ENCODE measurements at regions of chr11 and their contacts with region 1.

Region 1: GRCh38 chr11:35006389-35007128 is 90.1 kb downstream of the PDHX start:
- DNase-seq: no peak
- H3K4me3 Mint-ChIP-seq: no peak overlapping the region
- H3K27ac Mint-ChIP-seq: peak overlapping the region; percentile 86
- H3K4me1 Mint-ChIP-seq: peaks cover 73% of the 10 kb centered on the region
- H3K27me3 Mint-ChIP-seq: no peaks in the 10 kb centered on the region
- CTCF ChIP-seq: no peak

Region 2: GRCh38 chr11:34869426-34869825 is 137.1 kb before region 1 on chr11:
- CTCF ChIA-PET with region 1: no interaction called
- intact Hi-C with region 1: no loop called
- DNase-seq: no peak
- H3K4me3 Mint-ChIP-seq: no peak overlapping the region
- H3K27ac Mint-ChIP-seq: no peak overlapping the region
- H3K4me1 Mint-ChIP-seq: peaks cover 16% of the 10 kb centered on the region
- H3K27me3 Mint-ChIP-seq: no peaks in the 10 kb centered on the region
- CTCF ChIP-seq: no peak

Region 3: GRCh38 chr11:34886609-34887008 is 120.0 kb before region 1 on chr11:
- CTCF ChIA-PET with region 1: no interaction called
- intact Hi-C with region 1: no loop called
- DNase-seq: no peak
- H3K4me3 Mint-ChIP-seq: no peak overlapping the region
- H3K27ac Mint-ChIP-seq: peak overlapping the region; percentile 9
- H3K4me1 Mint-ChIP-seq: peaks cover 20% of the 10 kb centered on the region
- H3K27me3 Mint-ChIP-seq: no peaks in the 10 kb centered on the region
- CTCF ChIP-seq: no peak

Region 4: DNA sequence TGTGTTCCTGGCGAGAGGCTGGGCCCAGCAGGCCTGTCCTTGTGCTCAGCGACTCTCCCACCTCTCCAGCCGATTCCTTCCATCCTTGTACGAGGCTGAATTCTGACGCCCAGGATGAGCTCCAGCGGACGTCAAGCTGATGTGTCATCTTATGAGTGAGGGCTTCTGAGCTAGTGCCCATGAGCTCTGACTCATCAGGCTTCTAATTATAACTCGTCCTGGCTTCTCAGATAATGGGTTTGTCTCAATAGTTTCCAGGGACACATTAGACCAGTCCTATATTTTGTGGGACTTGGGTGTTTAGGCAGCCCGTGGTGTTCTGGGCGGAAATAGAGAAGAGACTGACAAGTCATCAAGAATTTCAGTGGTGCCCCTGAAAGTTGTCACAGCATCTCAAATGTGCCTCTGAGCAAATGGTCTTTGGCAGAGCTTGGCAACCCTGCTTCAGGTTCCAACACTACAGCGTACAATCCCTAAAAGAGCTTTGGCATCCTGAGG is 24.2 kb after region 1 on chr11:
- CTCF ChIA-PET with region 1: interaction called, 10 read pairs
- intact Hi-C with region 1: no loop called
- DNase-seq: peak; percentile 41
- H3K4me3 Mint-ChIP-seq: no peak overlapping the region
- H3K27ac Mint-ChIP-seq: no peak overlapping the region
- H3K4me1 Mint-ChIP-seq: peaks cover 54% of the 10 kb centered on the region
- H3K27me3 Mint-ChIP-seq: no peaks in the 10 kb centered on the region
- CTCF ChIP-seq: no peak

Region 5: DNA sequence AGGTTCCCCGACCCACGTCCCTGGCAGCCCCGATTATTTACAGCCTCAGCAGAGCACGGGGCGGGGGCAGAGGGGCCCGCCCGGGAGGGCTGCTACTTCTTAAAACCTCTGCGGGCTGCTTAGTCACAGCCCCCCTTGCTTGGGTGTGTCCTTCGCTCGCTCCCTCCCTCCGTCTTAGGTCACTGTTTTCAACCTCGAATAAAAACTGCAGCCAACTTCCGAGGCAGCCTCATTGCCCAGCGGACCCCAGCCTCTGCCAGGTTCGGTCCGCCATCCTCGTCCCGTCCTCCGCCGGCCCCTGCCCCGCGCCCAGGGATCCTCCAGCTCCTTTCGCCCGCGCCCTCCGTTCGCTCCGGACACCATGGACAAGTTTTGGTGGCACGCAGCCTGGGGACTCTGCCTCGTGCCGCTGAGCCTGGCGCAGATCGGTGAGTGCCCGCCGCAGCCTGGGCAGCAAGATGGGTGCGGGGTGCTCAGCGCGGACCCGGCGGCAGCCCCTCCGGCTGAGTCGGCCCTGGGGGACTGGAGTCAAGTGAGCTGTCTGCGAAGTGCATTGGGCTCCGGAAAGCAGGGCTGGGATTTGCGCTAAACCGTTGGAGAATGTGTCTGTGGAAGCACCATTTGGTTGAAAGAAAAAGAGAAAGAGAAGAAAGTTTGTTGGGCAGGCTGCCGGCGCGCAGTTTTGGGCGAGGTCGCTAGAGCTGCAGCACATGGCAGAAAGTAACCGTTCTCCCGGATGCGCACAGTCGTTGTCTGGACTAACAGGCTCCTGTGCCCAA is 132.6 kb after region 1 on chr11 and contains the start of gene CD44:
- CTCF ChIA-PET with region 1: interaction called, 26 read pairs
- intact Hi-C with region 1: loop called (anchors 1 kb)
- DNase-seq: peak; percentile 67
- H3K4me3 Mint-ChIP-seq: peak within 1 kb of the TSS; percentile 87
- H3K27ac Mint-ChIP-seq: peak within 1 kb of the TSS; percentile 65
- H3K4me1 Mint-ChIP-seq: peaks cover 59% of the 10 kb centered on the region
- H3K27me3 Mint-ChIP-seq: no peaks in the 10 kb centered on the region
- CTCF ChIP-seq: no peak
- total RNA-seq, gene CD44: 1,189 and 1,365 TPM in 2 replicates

Region 6: GRCh38 chr11:35165423-35166368 is 159.1 kb after region 1 on chr11:
- CTCF ChIA-PET with region 1: interaction called, 15 read pairs
- intact Hi-C with region 1: loop called (anchors 2 kb)
- DNase-seq: peak; percentile 70
- H3K4me3 Mint-ChIP-seq: peak overlapping the region; percentile 51
- H3K27ac Mint-ChIP-seq: peak overlapping the region; percentile 99
- H3K4me1 Mint-ChIP-seq: peaks cover 98% of the 10 kb centered on the region
- H3K27me3 Mint-ChIP-seq: no peaks in the 10 kb centered on the region
- CTCF ChIP-seq: no peak

Region 7: DNA sequence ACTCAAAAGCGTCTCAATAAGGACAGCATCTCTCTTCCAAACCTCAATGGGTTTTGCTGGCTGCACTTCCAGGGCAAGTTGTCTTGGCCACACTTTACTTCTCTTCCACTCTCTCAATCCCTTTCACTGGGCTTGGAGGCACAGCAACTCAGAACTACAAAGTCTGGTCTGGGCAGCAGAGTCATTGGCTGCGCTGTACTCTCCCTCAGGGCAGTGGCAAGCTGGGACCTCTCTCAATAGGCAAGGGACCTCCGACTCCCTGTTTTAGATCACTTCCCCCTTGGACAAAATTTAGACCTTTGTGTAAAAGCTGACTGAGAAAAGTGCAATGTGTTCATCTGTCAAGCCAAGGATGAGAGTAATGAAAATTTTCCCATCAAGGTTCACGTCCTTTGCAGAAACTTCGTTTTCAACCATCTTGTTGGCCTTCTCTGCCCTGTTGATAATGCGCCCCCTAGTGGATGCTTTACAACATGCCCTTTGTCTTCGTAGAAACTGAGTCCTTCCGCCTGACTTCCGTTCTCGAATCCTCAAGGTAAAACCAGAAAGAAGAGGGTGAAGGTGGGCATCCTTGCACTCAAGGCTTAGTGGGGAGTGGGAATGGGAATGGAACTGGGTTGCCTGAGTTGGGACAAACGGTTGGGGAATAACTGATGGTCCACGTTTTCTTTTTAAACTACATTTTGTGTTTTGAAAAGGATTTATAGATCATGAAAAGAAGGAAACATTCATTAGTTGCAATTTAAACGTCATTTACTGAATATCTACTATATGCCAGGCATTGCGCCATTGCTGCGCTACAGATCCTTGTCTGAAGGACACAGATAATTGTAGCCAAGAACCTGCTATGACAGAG is 231.5 kb after region 1 on chr11:
- CTCF ChIA-PET with region 1: interaction called, 3 read pairs
- intact Hi-C with region 1: loop called (anchors 5 kb)
- DNase-seq: peak; percentile 32
- H3K4me3 Mint-ChIP-seq: no peak overlapping the region
- H3K27ac Mint-ChIP-seq: no peak overlapping the region
- H3K4me1 Mint-ChIP-seq: peaks cover 47% of the 10 kb centered on the region
- H3K27me3 Mint-ChIP-seq: no peaks in the 10 kb centered on the region
- CTCF ChIP-seq: peak; percentile 80